Activated B cell treated with CpG ODN at 0.5 μM for 24 hours (primary cell): ENCODE measurements at regions of chr10 and their contacts with region 1.

Region 1: GRCh38 chr10:118568327-118568848 is 27.1 kb downstream of the PRLHR start:
- DNase-seq: no peak
- ATAC-seq: peak; percentile 40
- H3K4me3 Mint-ChIP-seq: no peak overlapping the region
- H3K27ac Mint-ChIP-seq: no peak overlapping the region
- H3K4me1 Mint-ChIP-seq: peaks cover 2% of the 10 kb centered on the region
- H3K27me3 Mint-ChIP-seq: peaks cover 13% of the 10 kb centered on the region
- CTCF ChIP-seq: peak; percentile 50

Region 2: DNA sequence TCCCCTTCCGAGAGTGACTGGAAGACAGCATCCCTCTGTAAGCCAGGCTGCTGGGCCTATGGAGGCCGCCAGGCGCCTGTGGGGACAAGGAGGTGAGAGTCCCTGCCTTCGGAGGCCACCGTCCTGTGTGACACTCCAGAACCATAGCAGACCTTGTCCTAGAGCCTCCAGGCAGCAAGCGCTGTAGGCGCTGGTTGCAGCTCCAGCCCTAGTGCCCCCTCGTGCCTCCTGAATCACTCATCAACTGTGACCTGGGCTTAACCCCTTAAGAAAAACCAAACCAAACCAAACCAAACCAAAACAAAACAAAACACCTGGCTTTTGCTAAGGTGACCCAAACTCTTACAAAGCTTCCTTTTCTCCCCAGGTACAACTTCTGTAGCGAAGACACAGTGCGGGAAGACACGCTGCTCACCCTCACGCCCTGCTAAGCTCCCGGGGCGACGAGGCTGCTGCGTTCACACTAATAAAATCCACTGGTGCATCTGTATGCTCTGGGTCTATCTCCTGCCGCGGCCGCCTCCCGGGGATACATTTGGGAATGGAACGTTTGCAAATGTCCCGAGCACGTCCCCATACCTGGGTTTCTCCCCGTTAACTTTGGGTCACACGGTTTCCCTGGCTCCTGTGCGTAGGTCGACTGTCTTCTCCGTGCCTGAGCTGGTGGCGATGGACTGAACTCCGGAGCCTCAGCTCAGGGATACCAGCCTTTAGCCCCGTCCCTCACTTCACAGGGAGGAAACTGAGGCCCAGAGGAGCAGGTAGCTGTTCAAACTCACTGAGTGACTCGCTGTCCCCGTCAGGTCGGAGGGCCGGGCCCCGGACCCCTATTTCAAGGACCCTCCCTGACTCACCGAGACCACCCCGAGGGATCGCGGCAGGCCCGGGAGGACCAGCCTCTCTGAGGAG is 1959.4 kb before region 1 on chr10:
- CTCF ChIA-PET with region 1: no interaction called
- POLR2A ChIA-PET with region 1: no interaction called
- intact Hi-C with region 1: no loop called
- DNase-seq: no peak
- ATAC-seq: no peak
- H3K4me3 Mint-ChIP-seq: no peak overlapping the region
- H3K27ac Mint-ChIP-seq: no peak overlapping the region
- H3K4me1 Mint-ChIP-seq: no peaks in the 10 kb centered on the region
- H3K27me3 Mint-ChIP-seq: peaks cover 5% of the 10 kb centered on the region
- CTCF ChIP-seq: no peak

Region 3: GRCh38 chr10:117896517-117896916 is 671.9 kb before region 1 on chr10:
- CTCF ChIA-PET with region 1: no interaction called
- POLR2A ChIA-PET with region 1: no interaction called
- intact Hi-C with region 1: no loop called
- DNase-seq: no peak
- ATAC-seq: no peak
- H3K4me3 Mint-ChIP-seq: no peak overlapping the region
- H3K27ac Mint-ChIP-seq: no peak overlapping the region
- H3K4me1 Mint-ChIP-seq: no peaks in the 10 kb centered on the region
- H3K27me3 Mint-ChIP-seq: no peaks in the 10 kb centered on the region
- CTCF ChIP-seq: no peak

Region 4: GRCh38 chr10:118584181-118584954 is 16.0 kb after region 1 on chr10:
- CTCF ChIA-PET with region 1: interaction called, 13 read pairs
- POLR2A ChIA-PET with region 1: no interaction called
- intact Hi-C with region 1: no loop called
- DNase-seq: no peak
- ATAC-seq: no peak
- H3K4me3 Mint-ChIP-seq: no peak overlapping the region
- H3K27ac Mint-ChIP-seq: no peak overlapping the region
- H3K4me1 Mint-ChIP-seq: no peaks in the 10 kb centered on the region
- H3K27me3 Mint-ChIP-seq: peaks cover 10% of the 10 kb centered on the region
- CTCF ChIP-seq: no peak

Region 5: DNA sequence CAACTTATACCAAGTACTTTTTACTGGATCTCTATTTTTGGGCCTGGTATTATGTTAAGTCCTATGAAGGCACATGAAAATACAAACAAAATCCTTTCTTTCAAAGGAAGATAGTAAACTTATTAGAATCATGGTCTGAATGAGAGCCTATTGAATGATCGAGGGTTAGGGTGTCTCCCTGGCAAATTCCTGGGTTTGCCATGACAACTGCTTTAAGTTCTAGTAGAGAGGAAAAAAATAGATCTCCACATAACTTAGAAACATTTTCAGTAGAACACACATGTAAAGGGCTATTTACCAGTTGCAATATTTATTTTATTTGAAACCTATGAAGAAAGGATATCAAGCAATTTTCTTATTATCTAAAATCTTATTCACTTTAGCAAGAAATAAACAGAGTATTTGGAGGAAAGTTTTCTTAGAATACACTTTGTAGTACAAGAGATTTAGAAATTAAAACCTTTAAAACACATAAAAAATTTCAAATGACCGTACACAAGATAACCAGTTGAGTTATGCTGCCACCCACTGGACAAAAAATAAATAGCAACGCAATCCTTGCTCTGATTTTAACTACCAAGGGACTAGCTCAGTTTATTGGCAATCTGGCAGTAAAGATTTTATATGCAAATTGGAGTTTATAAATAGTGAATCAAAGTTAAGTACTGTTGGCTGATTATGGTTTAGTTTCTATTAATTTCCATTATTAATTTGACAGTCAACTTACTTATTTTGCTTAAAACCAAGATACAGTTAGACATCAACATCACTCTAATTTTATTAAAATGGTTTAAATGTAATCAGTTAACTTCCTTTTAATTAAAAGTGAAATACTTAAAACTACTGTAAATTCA is 152.5 kb after region 1 on chr10:
- CTCF ChIA-PET with region 1: interaction called, 19 read pairs
- POLR2A ChIA-PET with region 1: interaction called, 4 read pairs
- intact Hi-C with region 1: loop called (anchors 1 kb)
- DNase-seq: no peak
- ATAC-seq: peak; percentile 56
- H3K4me3 Mint-ChIP-seq: no peak overlapping the region
- H3K27ac Mint-ChIP-seq: no peak overlapping the region
- H3K4me1 Mint-ChIP-seq: peaks cover 8% of the 10 kb centered on the region
- H3K27me3 Mint-ChIP-seq: no peaks in the 10 kb centered on the region
- CTCF ChIP-seq: peak; percentile 72

Region 6: DNA sequence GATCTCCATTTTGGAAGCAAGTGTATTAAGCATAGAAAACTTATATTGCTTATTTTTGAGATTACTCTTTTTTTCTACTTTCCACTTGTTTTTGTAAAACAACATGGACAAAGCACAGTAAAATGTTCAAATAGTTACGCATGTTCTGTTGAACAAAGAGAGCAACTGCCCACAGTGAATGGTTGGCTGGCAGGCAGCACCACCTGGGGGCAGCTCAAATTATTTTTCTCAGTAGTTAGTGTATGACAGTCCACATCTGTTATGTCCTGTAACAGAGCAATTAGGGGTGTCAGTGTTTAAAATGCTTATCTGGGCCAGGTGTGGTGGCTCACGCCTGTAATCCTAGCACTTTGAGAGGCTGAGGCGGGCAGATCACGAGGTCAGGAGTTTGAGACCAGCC is 232.5 kb after region 1 on chr10:
- CTCF ChIA-PET with region 1: interaction called, 10 read pairs
- POLR2A ChIA-PET with region 1: no interaction called
- intact Hi-C with region 1: no loop called
- DNase-seq: no peak
- ATAC-seq: no peak
- H3K4me3 Mint-ChIP-seq: no peak overlapping the region
- H3K27ac Mint-ChIP-seq: no peak overlapping the region
- H3K4me1 Mint-ChIP-seq: no peaks in the 10 kb centered on the region
- H3K27me3 Mint-ChIP-seq: peaks cover 2% of the 10 kb centered on the region
- CTCF ChIP-seq: no peak

Region 7: DNA sequence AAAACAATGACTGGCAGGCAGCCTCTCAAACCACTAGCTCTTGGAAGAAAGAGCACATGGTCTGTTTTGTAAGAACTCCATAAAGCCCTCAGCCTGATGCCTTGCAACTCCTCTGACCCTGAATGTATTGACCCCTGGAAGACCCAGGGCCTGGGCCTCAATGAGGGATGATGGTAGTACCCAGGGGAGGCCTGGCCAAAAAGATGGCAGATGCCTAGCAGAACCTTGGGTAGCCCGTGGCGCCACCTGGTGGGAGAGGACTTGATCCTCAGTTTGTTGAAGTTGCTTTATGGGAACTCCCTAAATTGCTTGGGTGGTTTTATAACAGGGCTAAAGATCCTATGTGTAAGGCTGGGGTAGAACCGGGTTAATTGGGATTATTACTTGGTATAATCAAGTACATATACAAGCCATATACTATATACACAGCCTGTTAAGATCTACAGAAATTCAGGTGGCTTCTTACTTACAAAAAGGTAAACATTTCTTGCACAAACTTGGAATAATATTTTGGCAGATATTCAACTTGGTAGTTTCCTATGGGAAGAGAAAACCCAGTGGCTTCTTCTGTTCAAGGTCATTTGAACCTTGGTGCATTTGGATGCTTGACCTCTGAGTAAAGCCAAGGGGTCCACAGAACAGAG is 282.2 kb after region 1 on chr10:
- CTCF ChIA-PET with region 1: interaction called, 12 read pairs
- POLR2A ChIA-PET with region 1: no interaction called
- intact Hi-C with region 1: loop called (anchors 1 kb)
- DNase-seq: peak; percentile 25
- ATAC-seq: no peak
- H3K4me3 Mint-ChIP-seq: no peak overlapping the region
- H3K27ac Mint-ChIP-seq: no peak overlapping the region
- H3K4me1 Mint-ChIP-seq: no peaks in the 10 kb centered on the region
- H3K27me3 Mint-ChIP-seq: no peaks in the 10 kb centered on the region
- CTCF ChIP-seq: no peak

Region 8: GRCh38 chr10:119030421-119031250 is 462.2 kb after region 1 on chr10:
- CTCF ChIA-PET with region 1: no interaction called
- POLR2A ChIA-PET with region 1: no interaction called
- intact Hi-C with region 1: loop called (anchors 10 kb)
- DNase-seq: peak; percentile 72
- ATAC-seq: peak; percentile 80
- H3K4me3 Mint-ChIP-seq: peak overlapping the region; percentile 75
- H3K27ac Mint-ChIP-seq: peak overlapping the region; percentile 68
- H3K4me1 Mint-ChIP-seq: peaks cover 22% of the 10 kb centered on the region
- H3K27me3 Mint-ChIP-seq: peaks cover 23% of the 10 kb centered on the region
- CTCF ChIP-seq: no peak

Region 9: DNA sequence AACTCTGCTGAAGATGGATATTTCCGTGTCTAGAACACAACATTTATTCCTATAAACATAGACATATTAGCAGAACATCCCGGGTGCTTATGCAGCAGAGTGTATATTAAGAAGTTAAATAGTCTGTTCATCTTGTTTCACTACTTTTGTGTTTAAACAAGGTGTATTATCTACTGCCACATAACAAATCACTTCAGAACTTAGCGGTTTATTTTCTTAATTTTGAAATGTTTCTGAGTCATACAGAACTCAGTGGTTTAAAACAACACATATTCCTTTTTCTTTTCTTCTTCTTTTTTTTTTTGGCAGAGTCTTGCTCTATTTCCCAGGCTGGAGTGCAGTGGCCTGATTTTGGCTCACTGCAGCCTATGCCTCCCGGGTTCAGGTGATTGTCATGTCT is 561.3 kb after region 1 on chr10:
- CTCF ChIA-PET with region 1: no interaction called
- POLR2A ChIA-PET with region 1: no interaction called
- intact Hi-C with region 1: no loop called
- DNase-seq: no peak
- ATAC-seq: no peak
- H3K4me3 Mint-ChIP-seq: no peak overlapping the region
- H3K27ac Mint-ChIP-seq: no peak overlapping the region
- H3K4me1 Mint-ChIP-seq: peaks cover 17% of the 10 kb centered on the region
- H3K27me3 Mint-ChIP-seq: no peaks in the 10 kb centered on the region
- CTCF ChIP-seq: no peak

Region 10: GRCh38 chr10:120336911-120337540 is 1768.6 kb after region 1 on chr10:
- CTCF ChIA-PET with region 1: no interaction called
- POLR2A ChIA-PET with region 1: no interaction called
- intact Hi-C with region 1: loop called (anchors 10 kb)
- DNase-seq: peak; percentile 35
- ATAC-seq: no peak
- H3K4me3 Mint-ChIP-seq: no peak overlapping the region
- H3K27ac Mint-ChIP-seq: no peak overlapping the region
- H3K4me1 Mint-ChIP-seq: no peaks in the 10 kb centered on the region
- H3K27me3 Mint-ChIP-seq: no peaks in the 10 kb centered on the region
- CTCF ChIP-seq: peak; percentile 93